Right lobe of liver (tissue), 6 donors: ENCODE measurements at regions of chr20 and their contacts with region 1.

Region 1: GRCh38 chr20:19692685-19693119 is 65.4 kb upstream of the RIN2 start:
- DNase-seq: peak in 2 of 3 donors; percentile 47 to 58
- ATAC-seq: peak; percentile 47 to 74 (median 72)
- H3K4me3 ChIP-seq: no peak overlapping the region
- H3K27ac ChIP-seq: no peak overlapping the region
- H3K4me1 ChIP-seq: no peaks in the 10 kb centered on the region
- H3K27me3 ChIP-seq: no peaks in the 10 kb centered on the region
- CTCF ChIP-seq: peak; percentile 64 to 97 (median 91)
- POLR2A ChIP-seq: no peak

Region 2: GRCh38 chr20:19628570-19629169 is 64.0 kb before region 1 on chr20:
- intact Hi-C with region 1: no loop called
- DNase-seq: peak in 2 of 3 donors; percentile 20 to 76
- ATAC-seq: peak; percentile 94 to 98 (median 95)
- H3K4me3 ChIP-seq: no peak overlapping the region
- H3K27ac ChIP-seq: no peak overlapping the region
- H3K4me1 ChIP-seq: no peaks in the 10 kb centered on the region
- H3K27me3 ChIP-seq: no peaks in the 10 kb centered on the region
- CTCF ChIP-seq: peak; percentile 57 to 78 (median 72)
- POLR2A ChIP-seq: no peak

Region 3: DNA sequence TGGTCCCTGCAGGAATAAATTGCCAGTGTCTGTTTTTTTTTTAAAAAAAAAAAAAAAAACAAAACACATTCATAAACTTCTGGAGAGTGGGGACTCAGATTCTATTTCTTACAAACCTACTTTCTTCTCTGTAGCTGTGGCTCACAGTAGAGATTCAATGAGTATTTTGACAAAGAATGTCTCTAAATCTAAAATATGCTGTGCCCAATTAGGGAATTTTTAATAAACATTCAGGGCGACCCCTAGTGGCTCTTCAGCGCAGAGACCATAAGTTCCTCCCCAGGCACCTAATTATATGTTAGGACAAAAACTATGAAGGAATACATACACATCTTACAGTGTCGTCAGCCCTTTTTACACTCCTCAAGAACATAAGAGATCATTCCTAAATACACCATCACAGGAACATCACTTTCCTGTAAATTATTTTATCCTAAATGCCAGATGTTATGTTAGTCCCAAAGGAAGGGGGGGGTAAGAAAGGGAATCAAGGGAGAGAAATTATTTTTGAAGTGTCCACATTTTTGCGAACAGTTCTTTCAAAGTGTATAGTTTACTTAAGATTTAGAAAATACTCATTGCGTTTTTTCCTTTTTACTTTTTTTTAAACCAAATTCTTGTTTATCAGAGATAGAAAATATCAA is 302.6 kb after region 1 on chr20:
- intact Hi-C with region 1: loop called in 1 of 2 experiments (anchors 10 kb)
- DNase-seq: no peak
- ATAC-seq: peak; percentile 58 to 71 (median 67)
- H3K4me3 ChIP-seq: no peak overlapping the region
- H3K27ac ChIP-seq: no peak overlapping the region
- H3K4me1 ChIP-seq: peaks cover 0 to 35% (median 4%) of the 10 kb centered on the region in 4 donors
- H3K27me3 ChIP-seq: no peaks in the 10 kb centered on the region
- CTCF ChIP-seq: peak; percentile 74 to 87 (median 81)
- POLR2A ChIP-seq: no peak